Activated naive CD4-positive, alpha-beta T cell treated with anti-CD3 and anti-CD28 coated beads for 36 hours (primary cell): ENCODE measurements at regions of chr1 and their contacts with region 1.

Region 1: DNA sequence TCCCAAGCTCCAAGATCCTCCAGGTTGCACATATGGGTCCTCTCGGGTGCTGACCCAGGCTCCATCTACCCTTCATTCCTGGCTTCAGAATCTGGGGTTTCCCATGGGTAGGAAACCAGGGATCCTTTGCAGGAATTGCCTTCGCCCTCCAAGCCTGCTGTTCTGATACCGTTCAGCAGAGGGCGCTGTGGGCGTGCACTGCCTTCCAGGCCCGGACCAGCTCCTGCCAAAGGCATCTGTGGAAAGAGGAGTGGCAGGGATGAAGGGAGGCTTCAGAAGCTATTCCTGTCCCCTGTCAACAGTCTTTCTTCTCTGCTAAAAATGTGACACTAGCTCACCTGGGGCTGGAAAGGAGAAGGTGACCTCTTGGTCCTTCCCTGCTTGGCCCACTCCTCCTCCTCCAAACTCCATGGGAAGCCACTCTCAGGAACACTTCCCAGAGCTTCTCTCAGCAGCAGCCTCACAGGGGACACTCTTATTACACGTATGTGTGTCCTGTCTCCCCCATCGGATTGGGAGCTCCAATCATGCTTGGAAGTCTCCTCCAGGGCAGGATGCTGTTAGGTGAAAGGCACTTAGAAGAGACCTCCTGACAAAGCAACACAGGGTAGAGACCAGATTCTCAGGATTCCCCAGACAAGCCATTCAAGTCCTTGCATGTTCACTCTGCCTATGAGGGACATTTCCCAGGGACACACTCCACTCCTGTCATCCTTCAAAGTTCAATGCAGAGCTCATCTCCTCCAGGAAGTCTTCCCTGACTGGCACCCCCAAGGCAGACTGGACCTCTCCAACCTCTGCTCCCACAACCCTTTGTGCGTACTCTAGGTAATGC is 71.3 kb downstream of the VWA5B1 start:
- DNase-seq: peak; percentile 56
- H3K4me3 Mint-ChIP-seq: no peak overlapping the region
- H3K27ac Mint-ChIP-seq: no peak overlapping the region
- H3K4me1 Mint-ChIP-seq: peaks cover 19% of the 10 kb centered on the region
- H3K27me3 Mint-ChIP-seq: peaks cover 60% of the 10 kb centered on the region

Region 2: DNA sequence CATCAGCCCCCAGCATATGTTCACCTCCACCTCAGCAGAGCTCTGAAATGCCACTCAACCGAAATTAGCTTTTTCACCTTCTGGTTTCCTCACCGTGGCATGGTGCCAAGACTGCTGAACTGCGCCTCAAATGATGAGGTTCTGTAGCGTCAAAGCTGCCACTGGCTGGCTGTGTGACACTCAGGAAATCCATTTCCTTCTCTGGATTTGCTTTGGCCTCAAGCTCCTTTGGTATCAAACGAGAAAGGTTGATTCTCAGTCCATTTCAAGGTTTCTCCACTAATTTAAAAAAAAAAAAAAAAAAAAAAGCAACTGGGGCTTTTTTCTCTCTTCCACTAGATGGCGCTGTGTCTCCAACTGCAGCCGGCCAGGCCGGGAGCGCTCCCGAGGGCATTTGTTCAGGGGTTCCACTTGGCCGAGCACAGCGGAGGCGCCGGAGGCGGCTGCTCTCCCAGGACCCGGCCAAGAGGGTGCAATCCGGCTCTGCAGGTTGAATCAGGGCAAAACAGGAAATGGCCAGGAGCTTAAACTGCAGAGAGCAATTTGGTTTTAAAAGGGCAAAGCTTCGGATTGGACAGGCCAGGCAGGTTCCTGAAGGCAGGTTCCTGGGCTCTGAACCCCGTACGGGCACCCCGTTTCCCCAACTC is 149.2 kb before region 1 on chr1:
- CTCF ChIA-PET with region 1: interaction called, 3 read pairs
- intact Hi-C with region 1: loop called (anchors 2 kb)
- DNase-seq: peak; percentile 66
- H3K4me3 Mint-ChIP-seq: no peak overlapping the region
- H3K27ac Mint-ChIP-seq: no peak overlapping the region
- H3K4me1 Mint-ChIP-seq: peaks cover 7% of the 10 kb centered on the region
- H3K27me3 Mint-ChIP-seq: peaks cover 21% of the 10 kb centered on the region

Region 3: DNA sequence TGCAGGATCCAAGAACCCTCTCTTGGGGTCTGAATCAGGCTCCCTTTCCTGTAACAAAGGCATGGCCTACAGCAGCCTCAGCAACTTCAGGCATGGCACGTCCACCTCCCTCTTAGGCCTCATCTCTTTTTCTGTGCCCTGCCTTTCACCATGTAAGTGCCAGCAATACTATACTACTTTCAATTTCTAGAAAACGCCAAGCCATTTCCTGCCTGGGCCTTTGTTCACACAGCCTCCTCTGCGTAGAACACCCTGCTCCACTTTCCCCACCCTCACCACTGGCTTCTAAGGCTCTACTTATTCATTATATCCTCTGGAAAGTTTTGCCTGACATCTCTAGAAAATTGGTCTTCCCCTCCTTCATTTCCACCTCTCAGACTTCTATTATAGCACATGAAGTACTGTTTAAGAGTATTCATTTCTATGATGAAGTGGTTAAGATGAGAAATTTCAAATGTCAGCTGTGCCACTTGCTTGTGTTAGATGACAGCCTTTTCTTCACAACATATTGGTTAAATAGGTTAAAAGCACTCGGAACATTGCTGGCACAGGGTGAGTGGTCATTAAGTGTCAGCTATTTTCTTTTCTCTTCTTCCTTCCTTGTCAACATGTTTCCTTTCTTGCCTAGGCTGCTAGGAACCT is 112.9 kb before region 1 on chr1:
- CTCF ChIA-PET with region 1: interaction called, 6 read pairs
- intact Hi-C with region 1: loop called (anchors 1 kb)
- DNase-seq: peak; percentile 86
- H3K4me3 Mint-ChIP-seq: peak overlapping the region; percentile 32
- H3K27ac Mint-ChIP-seq: peak overlapping the region; percentile 95
- H3K4me1 Mint-ChIP-seq: peaks cover 25% of the 10 kb centered on the region
- H3K27me3 Mint-ChIP-seq: no peaks in the 10 kb centered on the region

Region 4: DNA sequence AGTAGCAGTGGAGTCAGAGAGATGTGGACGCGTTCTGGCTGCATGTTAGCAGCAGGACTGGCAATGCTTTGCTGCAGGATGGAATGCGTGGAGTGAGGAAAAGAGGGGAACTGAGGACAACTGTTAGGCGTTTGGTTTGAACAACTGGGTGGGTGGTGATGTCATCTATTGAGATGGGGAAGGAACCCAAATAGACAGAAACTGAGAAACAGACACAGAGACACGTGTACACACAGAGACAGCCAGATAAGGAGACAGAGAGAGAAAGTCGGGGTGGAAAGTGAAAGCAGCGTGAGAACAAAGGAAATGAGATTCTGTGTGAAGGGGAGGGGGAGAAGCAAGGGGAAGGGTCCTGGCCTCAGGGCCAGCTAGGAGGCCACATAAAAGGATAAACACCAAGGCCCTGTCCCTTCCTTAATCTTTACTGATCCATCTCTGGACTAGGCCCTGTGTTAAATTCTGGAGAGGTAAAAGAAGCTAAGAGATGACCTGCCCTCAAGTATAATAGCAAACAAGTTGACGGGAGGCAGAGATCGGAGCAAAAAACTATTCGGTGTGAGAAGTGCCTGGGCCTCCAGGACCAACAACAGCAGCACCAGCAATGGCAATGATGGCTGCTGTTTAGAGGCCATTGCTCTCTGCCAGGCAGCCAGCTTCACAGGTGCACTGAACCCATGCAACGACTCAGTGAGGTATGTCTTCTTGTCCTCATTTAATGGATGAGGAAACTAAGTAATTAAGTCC is 39.8 kb before region 1 on chr1:
- CTCF ChIA-PET with region 1: no interaction called
- intact Hi-C with region 1: loop called (anchors 1 kb)
- DNase-seq: peak; percentile 63
- H3K4me3 Mint-ChIP-seq: peak overlapping the region; percentile 7
- H3K27ac Mint-ChIP-seq: peak overlapping the region; percentile 73
- H3K4me1 Mint-ChIP-seq: peaks cover 28% of the 10 kb centered on the region
- H3K27me3 Mint-ChIP-seq: peaks cover 2% of the 10 kb centered on the region

Region 5: GRCh38 chr1:20376880-20377494 is 15.0 kb after region 1 on chr1:
- CTCF ChIA-PET with region 1: interaction called, 12 read pairs
- intact Hi-C with region 1: no loop called
- DNase-seq: peak; percentile 78
- H3K4me3 Mint-ChIP-seq: no peak overlapping the region
- H3K27ac Mint-ChIP-seq: no peak overlapping the region
- H3K4me1 Mint-ChIP-seq: peaks cover 4% of the 10 kb centered on the region
- H3K27me3 Mint-ChIP-seq: peaks cover 28% of the 10 kb centered on the region

Region 6: GRCh38 chr1:20430355-20431175 is 68.5 kb after region 1 on chr1:
- CTCF ChIA-PET with region 1: interaction called, 5 read pairs
- intact Hi-C with region 1: loop called (anchors 1 kb)
- DNase-seq: peak; percentile 61
- H3K4me3 Mint-ChIP-seq: no peak overlapping the region
- H3K27ac Mint-ChIP-seq: no peak overlapping the region
- H3K4me1 Mint-ChIP-seq: peaks cover 20% of the 10 kb centered on the region
- H3K27me3 Mint-ChIP-seq: peaks cover 44% of the 10 kb centered on the region